ENCODE measurements at regions of chr1 and their contacts with region 1.

Region 1: GRCh38 chr1:185404291-185404690 is 87.2 kb upstream of the IVNS1ABP start:
- DNase-seq: peak; percentile 30 to 43
- ATAC-seq: peak in 4 of 8 donors; percentile 55 to 73 (median 58)
- H3K4me3 ChIP-seq: peak overlapping the region in 4 of 10 donors; percentile 12 to 29 (median 26)
- H3K27ac ChIP-seq: no peak overlapping the region
- H3K4me1 ChIP-seq: peaks cover 0 to 9% (median 0%) of the 10 kb centered on the region in 9 donors
- H3K27me3 ChIP-seq: no peaks in the 10 kb centered on the region
- CTCF ChIP-seq: no peak

Region 2: DNA sequence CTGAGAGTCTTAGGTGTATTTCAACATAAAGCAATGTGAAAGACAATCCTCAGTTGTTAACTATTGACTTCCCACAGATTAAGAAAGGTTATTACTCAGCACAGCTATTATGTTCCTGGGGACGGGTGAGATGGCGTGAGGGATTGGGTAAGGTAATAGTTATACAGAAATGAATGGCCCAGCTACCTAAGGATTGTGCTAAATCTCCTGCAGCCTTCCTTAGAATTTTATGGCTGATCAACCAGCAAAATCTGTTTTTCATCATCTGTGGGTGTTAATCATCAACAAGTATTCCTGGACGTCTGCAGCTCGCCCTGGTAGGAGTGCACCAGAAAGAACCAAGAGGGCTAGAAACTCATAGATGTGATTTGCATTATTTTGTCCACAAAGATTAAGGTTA is 58.7 kb after region 1 on chr1:
- intact Hi-C with region 1: loop called in 1 of 10 experiments (anchors 10 kb)
- DNase-seq: no peak
- ATAC-seq: no peak
- H3K4me3 ChIP-seq: no peak overlapping the region
- H3K27ac ChIP-seq: no peak overlapping the region
- H3K4me1 ChIP-seq: peaks cover 0 to 3% (median 0%) of the 10 kb centered on the region in 9 donors
- H3K27me3 ChIP-seq: no peaks in the 10 kb centered on the region
- CTCF ChIP-seq: no peak